ENCODE measurements at regions of chr22 and their contacts with region 1.

Region 1: DNA sequence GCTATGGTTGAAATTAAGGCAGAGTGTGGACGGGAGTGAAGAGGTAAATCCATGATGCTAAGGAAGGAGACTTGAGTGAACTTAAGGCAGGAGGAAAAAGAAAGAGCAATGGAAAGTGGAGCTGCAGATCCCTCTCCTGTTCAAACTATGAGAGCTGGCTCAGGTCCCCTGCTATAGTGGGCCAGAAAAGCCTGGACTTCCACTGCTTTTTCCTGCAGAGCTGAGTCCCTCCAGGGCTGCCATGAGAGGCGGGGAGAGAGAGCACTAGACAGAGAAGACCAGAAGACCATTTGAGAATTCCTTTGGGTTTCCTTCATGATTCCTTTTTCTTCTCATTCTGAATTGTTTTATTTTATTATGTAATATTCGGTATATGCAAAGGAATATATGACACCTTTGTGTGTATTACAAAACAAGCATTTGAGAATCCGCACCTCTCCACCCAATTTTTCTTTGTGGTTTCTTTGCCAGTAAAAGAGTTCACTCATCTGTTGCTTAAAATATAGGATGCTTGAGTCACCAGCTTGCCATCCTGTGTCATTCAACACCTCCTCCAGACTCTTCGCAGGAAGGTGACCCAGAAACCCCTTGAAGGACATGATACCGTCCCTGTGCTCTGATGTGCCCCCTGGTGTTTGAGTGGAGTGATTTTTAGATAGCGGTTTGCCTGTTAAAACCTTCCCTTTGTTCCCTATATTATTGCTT is 24.4 kb downstream of the SREBF2 start:
- DNase-seq: peak; percentile 46 to 89 (median 63)
- ATAC-seq: peak; percentile 75
- H3K4me3 ChIP-seq: no peak overlapping the region
- H3K4me3 Mint-ChIP-seq: peak overlapping the region; percentile 13
- H3K27ac ChIP-seq: no peak overlapping the region
- H3K27ac Mint-ChIP-seq: peak overlapping the region; percentile 59
- H3K4me1 ChIP-seq: peaks cover 49% of the 10 kb centered on the region
- H3K4me1 Mint-ChIP-seq: peaks cover 45% of the 10 kb centered on the region
- H3K27me3 ChIP-seq: no peaks in the 10 kb centered on the region
- H3K27me3 Mint-ChIP-seq: no peaks in the 10 kb centered on the region
- CTCF ChIP-seq: peak; percentile 72

Region 2: GRCh38 chr22:41697126-41697775 is 160.1 kb before region 1 on chr22:
- CTCF ChIA-PET with region 1: interaction called, 5 read pairs
- POLR2A ChIA-PET with region 1: no interaction called
- intact Hi-C with region 1: loop called (anchors 2 to 10 kb)
- DNase-seq: peak; percentile 84 to 98 (median 92)
- ATAC-seq: peak; percentile 78
- H3K4me3 ChIP-seq: peak overlapping the region; percentile 24
- H3K4me3 Mint-ChIP-seq: peak overlapping the region; percentile 59
- H3K27ac ChIP-seq: no peak overlapping the region
- H3K27ac Mint-ChIP-seq: no peak overlapping the region
- H3K4me1 ChIP-seq: peaks cover 24% of the 10 kb centered on the region
- H3K4me1 Mint-ChIP-seq: peaks cover 12% of the 10 kb centered on the region
- H3K27me3 ChIP-seq: no peaks in the 10 kb centered on the region
- H3K27me3 Mint-ChIP-seq: no peaks in the 10 kb centered on the region
- CTCF ChIP-seq: peak; percentile 98

Region 3: GRCh38 chr22:41746567-41747400 is 110.5 kb before region 1 on chr22:
- CTCF ChIA-PET with region 1: interaction called, 6 read pairs
- POLR2A ChIA-PET with region 1: no interaction called
- intact Hi-C with region 1: loop called (anchors 2 to 5 kb)
- DNase-seq: peak; percentile 29 to 81 (median 44)
- ATAC-seq: peak; percentile 90
- H3K4me3 ChIP-seq: no peak overlapping the region
- H3K4me3 Mint-ChIP-seq: no peak overlapping the region
- H3K27ac ChIP-seq: no peak overlapping the region
- H3K27ac Mint-ChIP-seq: no peak overlapping the region
- H3K4me1 ChIP-seq: peaks cover 5% of the 10 kb centered on the region
- H3K4me1 Mint-ChIP-seq: no peaks in the 10 kb centered on the region
- H3K27me3 ChIP-seq: no peaks in the 10 kb centered on the region
- H3K27me3 Mint-ChIP-seq: peaks cover 10% of the 10 kb centered on the region
- CTCF ChIP-seq: peak; percentile 81

Region 4: GRCh38 chr22:41822317-41823060 is 34.8 kb before region 1 on chr22:
- CTCF ChIA-PET with region 1: interaction called, 16 read pairs
- POLR2A ChIA-PET with region 1: no interaction called
- intact Hi-C with region 1: loop called (anchors 1 to 2 kb)
- DNase-seq: peak in 6 of 14 experiments; percentile 6 to 87 (median 66)
- ATAC-seq: peak; percentile 92
- H3K4me3 ChIP-seq: no peak overlapping the region
- H3K4me3 Mint-ChIP-seq: no peak overlapping the region
- H3K27ac ChIP-seq: no peak overlapping the region
- H3K27ac Mint-ChIP-seq: peak overlapping the region; percentile 69
- H3K4me1 ChIP-seq: peaks cover 5% of the 10 kb centered on the region
- H3K4me1 Mint-ChIP-seq: peaks cover 18% of the 10 kb centered on the region
- H3K27me3 ChIP-seq: no peaks in the 10 kb centered on the region
- H3K27me3 Mint-ChIP-seq: no peaks in the 10 kb centered on the region
- CTCF ChIP-seq: peak; percentile 60

Region 5: DNA sequence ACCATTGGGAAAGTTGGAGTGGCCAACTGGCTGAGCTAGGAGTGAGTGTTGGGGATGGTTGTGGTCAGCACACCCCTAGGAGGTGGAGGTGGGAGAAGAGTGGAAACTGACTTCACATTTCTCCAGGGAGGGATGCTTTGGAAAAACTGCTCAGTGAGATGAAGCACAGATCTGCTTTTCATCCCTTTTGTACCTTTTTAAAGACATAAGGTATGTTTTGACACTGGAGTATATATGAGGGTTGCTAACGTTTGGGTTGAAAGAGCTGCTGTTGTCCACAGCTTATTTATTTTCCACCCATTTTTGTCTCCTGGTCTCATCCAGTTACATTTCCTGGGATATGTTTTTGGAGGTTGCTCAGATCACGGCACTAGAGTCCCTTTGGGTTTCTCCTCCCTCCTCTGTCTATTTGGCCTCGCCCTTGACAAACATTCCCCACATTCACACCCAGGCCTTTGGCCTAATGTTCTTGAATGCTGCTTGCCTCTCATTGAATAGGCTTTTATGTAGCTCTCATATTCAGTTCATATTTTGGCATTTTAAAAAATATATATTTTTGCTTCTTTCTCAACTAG is 16.1 kb before region 1 on chr22:
- CTCF ChIA-PET with region 1: interaction called, 10 read pairs
- POLR2A ChIA-PET with region 1: no interaction called
- intact Hi-C with region 1: loop called in 1 of 2 experiments (anchors 2 kb)
- DNase-seq: no peak
- ATAC-seq: no peak
- H3K4me3 ChIP-seq: no peak overlapping the region
- H3K4me3 Mint-ChIP-seq: no peak overlapping the region
- H3K27ac ChIP-seq: no peak overlapping the region
- H3K27ac Mint-ChIP-seq: no peak overlapping the region
- H3K4me1 ChIP-seq: peaks cover 24% of the 10 kb centered on the region
- H3K4me1 Mint-ChIP-seq: peaks cover 75% of the 10 kb centered on the region
- H3K27me3 ChIP-seq: no peaks in the 10 kb centered on the region
- H3K27me3 Mint-ChIP-seq: no peaks in the 10 kb centered on the region
- CTCF ChIP-seq: no peak

Region 6: GRCh38 chr22:41873391-41873790 is 16.1 kb after region 1 on chr22:
- CTCF ChIA-PET with region 1: interaction called, 5 read pairs
- POLR2A ChIA-PET with region 1: interaction called, 4 read pairs
- intact Hi-C with region 1: loop called in 1 of 2 experiments (anchors 1 kb)
- DNase-seq: peak in 5 of 14 experiments; percentile 31 to 72 (median 69)
- ATAC-seq: peak; percentile 80
- H3K4me3 ChIP-seq: no peak overlapping the region
- H3K4me3 Mint-ChIP-seq: peak overlapping the region; percentile 46
- H3K27ac ChIP-seq: peak overlapping the region; percentile 39 to 46
- H3K27ac Mint-ChIP-seq: peak overlapping the region; percentile 89
- H3K4me1 ChIP-seq: peaks cover 15% of the 10 kb centered on the region
- H3K4me1 Mint-ChIP-seq: peaks cover 29% of the 10 kb centered on the region
- H3K27me3 ChIP-seq: no peaks in the 10 kb centered on the region
- H3K27me3 Mint-ChIP-seq: no peaks in the 10 kb centered on the region
- CTCF ChIP-seq: no peak

Measured in CD4-positive, alpha-beta T cell (primary cell).